IMR-90 (cell line): ENCODE measurements at regions of chr20 and their contacts with region 1.

Region 1: DNA sequence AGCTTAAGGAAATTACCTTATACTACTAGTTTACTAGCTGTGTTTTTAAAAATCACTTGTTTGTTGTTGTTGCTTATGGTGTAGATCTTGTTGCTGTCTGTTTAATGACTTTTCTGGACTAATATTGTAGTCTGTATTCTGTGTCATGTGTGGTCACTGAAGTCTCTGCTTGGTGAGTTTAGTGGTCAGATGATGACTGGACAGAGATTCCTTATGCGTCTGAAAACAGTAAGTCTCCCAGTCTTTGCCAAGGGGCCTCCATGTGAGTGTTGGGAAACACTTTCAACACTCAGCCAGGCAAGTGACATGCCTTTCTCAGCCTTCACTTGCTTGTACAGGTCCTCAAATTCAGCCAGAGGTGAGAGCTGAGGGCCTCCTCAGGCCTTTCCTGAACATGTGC is 256.9 kb upstream of the RNF24 start:
- DNase-seq: no peak
- ATAC-seq: no peak
- H3K4me3 ChIP-seq: no peak overlapping the region
- H3K27ac ChIP-seq: no peak overlapping the region
- H3K4me1 ChIP-seq: no peaks in the 10 kb centered on the region
- H3K27me3 ChIP-seq: peaks cover 13% of the 10 kb centered on the region
- CTCF ChIP-seq: no peak
- POLR2A ChIP-seq: no peak
- RAD21 ChIP-seq: no peak

Region 2: DNA sequence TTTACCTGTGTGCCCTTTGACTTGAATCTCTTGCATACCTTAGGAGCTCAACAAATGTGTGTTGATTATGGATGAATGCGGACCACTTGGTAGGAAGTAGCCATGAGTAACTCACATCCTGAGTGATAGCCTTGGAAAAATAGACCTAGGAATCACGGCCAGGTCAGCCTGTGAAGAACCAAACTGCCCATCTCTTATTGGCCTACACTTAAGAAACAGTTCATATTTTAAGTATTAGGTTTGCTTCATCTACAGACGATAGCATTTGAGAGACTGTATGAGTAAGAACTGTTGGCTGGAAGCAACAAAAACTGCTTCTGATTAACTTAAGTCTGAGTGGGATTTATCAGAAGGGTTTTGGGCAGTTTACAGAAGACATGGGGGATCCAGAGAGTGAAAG is 129.4 kb after region 1 on chr20:
- CTCF ChIA-PET with region 1: no interaction called
- POLR2A ChIA-PET with region 1: no interaction called
- dilution Hi-C with region 1: no loop called
- in situ Hi-C with region 1: no loop called
- intact Hi-C with region 1: loop called (anchors 10 kb)
- DNase-seq: peak; percentile 68
- ATAC-seq: 0 out of 2 replicates have a peak, but pooled peaks have one; percentile 32
- H3K4me3 ChIP-seq: no peak overlapping the region
- H3K27ac ChIP-seq: no peak overlapping the region
- H3K4me1 ChIP-seq: 0 out of 2 replicates have a peak, but pooled peaks cover 1% of the 10 kb centered on the region
- H3K27me3 ChIP-seq: peaks cover 5% of the 10 kb centered on the region; the same call in 1 of the 2 replicates
- CTCF ChIP-seq: no peak
- POLR2A ChIP-seq: no peak
- RAD21 ChIP-seq: no peak